Posterior vena cava (tissue), 2 donors: ENCODE measurements at regions of chr10 and their contacts with region 1.

Region 1: GRCh38 chr10:133351408-133352318 is 4.5 kb downstream of the PRAP1 start:
- DNase-seq: no peak

Region 2: GRCh38 chr10:133302209-133302608 is 49.5 kb before region 1 on chr10:
- intact Hi-C with region 1: loop called in 1 of 2 experiments (anchors 1 kb)
- DNase-seq: no peak

Region 3: GRCh38 chr10:133370030-133370786 is 18.5 kb after region 1 on chr10:
- intact Hi-C with region 1: loop called in 1 of 2 experiments (anchors 1 kb)
- DNase-seq: no peak